Activated CD4-positive, alpha-beta memory T cell treated with anti-CD3 and anti-CD28 coated beads, Interleukin-2, amount 10 ng/mL, durations not matched to agents 7 days and 5 days (primary cell): ENCODE measurements at regions of chr1 and their contacts with region 1.

Region 1: DNA sequence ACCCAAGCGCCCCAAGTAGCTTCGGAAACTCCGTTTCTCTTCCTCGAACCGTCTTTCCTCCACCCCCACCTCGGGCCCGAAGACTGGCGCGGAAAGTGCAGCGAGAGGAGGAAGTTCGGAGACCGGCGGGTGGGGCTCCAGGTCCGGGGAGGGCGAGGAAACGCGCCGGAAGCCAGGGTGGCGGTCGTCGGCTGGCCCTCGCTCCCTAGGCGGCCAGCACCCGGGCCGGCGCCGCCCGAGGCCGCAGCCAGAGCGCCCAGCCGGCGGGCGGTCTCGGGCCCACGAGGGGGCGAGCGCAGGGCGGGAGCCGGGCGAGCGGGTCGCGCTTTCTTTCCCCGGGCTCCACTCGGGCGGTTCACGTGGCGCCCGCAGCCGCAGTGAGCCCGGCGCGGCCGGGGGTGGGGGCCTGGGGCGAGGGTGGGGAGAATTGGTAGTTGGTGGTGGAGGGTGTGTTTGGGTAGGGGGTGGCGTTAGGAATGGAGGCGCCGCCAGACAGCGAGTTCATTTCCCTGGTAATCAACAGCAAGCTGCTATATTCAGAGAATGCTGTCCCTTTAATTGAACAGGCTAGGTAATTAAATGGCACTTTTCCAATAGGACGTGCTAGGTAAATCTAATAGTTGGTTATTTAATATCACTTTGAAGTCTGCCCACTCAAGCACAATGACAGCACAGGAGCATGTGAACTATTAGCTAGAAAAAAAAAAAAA is 6.7 kb downstream of the LMO4 start:
- DNase-seq: peak; percentile 77
- H3K4me3 Mint-ChIP-seq: peak overlapping the region; percentile 89
- H3K27ac Mint-ChIP-seq: peak overlapping the region; percentile 88
- H3K4me1 Mint-ChIP-seq: peaks cover 62% of the 10 kb centered on the region
- H3K27me3 Mint-ChIP-seq: no peaks in the 10 kb centered on the region

Region 2: GRCh38 chr1:87348341-87348999 is 13.1 kb after region 1 on chr1:
- CTCF ChIA-PET with region 1: interaction called, 4 read pairs
- POLR2A ChIA-PET with region 1: interaction called, 33 read pairs
- DNase-seq: no peak
- H3K4me3 Mint-ChIP-seq: no peak overlapping the region
- H3K27ac Mint-ChIP-seq: no peak overlapping the region
- H3K4me1 Mint-ChIP-seq: peaks cover 3% of the 10 kb centered on the region
- H3K27me3 Mint-ChIP-seq: no peaks in the 10 kb centered on the region

Region 3: GRCh38 chr1:87402241-87403002 is 67.1 kb after region 1 on chr1:
- CTCF ChIA-PET with region 1: interaction called, 4 read pairs
- POLR2A ChIA-PET with region 1: interaction called, 52 read pairs
- DNase-seq: no peak
- H3K4me3 Mint-ChIP-seq: no peak overlapping the region
- H3K27ac Mint-ChIP-seq: no peak overlapping the region
- H3K4me1 Mint-ChIP-seq: peaks cover 31% of the 10 kb centered on the region
- H3K27me3 Mint-ChIP-seq: peaks cover 11% of the 10 kb centered on the region

Region 4: GRCh38 chr1:87449348-87449963 is 114.1 kb after region 1 on chr1:
- CTCF ChIA-PET with region 1: interaction called, 9 read pairs
- POLR2A ChIA-PET with region 1: interaction called, 31 read pairs
- DNase-seq: peak; percentile 64
- H3K4me3 Mint-ChIP-seq: peak overlapping the region; percentile 62
- H3K27ac Mint-ChIP-seq: peak overlapping the region; percentile 87
- H3K4me1 Mint-ChIP-seq: peaks cover 25% of the 10 kb centered on the region
- H3K27me3 Mint-ChIP-seq: no peaks in the 10 kb centered on the region

Region 5: GRCh38 chr1:87523466-87523865 is 188.1 kb after region 1 on chr1:
- CTCF ChIA-PET with region 1: no interaction called
- POLR2A ChIA-PET with region 1: no interaction called
- DNase-seq: no peak
- H3K4me3 Mint-ChIP-seq: no peak overlapping the region
- H3K27ac Mint-ChIP-seq: no peak overlapping the region
- H3K4me1 Mint-ChIP-seq: peaks cover 4% of the 10 kb centered on the region
- H3K27me3 Mint-ChIP-seq: peaks cover 2% of the 10 kb centered on the region